Activated B cell treated with CpG ODN at 0.5 μM for 24 hours (primary cell): ENCODE measurements at regions of chr5 and their contacts with region 1.

Region 1: DNA sequence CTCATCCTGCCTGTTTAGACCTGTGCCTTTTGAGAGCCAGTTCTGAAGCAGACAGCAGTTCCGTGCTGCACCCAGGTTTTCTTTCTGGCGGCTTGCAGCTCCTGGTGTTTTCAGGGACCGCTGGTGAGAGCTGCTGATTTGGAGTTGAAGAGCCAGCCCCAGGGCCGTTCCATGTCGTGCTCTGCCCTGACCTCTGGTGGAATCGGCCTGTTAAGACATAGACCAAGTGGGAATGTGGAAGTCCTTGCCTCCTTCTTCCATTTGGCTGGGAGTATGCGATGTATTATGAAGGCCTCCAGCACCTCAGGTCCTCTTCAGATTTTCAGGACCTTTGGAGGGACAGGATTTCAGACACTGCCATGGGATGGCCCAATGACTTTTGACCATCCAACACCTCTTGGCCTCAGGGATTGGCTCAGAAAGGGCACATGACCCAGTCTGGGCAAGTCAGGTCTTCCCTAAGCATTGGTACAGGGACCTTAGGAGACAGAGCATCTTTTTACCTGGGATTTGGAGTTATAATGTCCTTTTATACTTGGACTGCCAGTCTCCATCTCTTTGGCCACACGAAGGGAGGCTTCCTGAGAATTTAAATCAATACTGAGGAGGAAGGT is 136.1 kb upstream of the CLINT1 start:
- DNase-seq: peak; percentile 21
- ATAC-seq: peak; percentile 84
- H3K4me3 Mint-ChIP-seq: no peak overlapping the region
- H3K27ac Mint-ChIP-seq: no peak overlapping the region
- H3K4me1 Mint-ChIP-seq: no peaks in the 10 kb centered on the region
- H3K27me3 Mint-ChIP-seq: peaks cover 2% of the 10 kb centered on the region
- CTCF ChIP-seq: no peak

Region 2: GRCh38 chr5:157761690-157762621 is 233.1 kb before region 1 on chr5:
- CTCF ChIA-PET with region 1: interaction called, 4 read pairs
- POLR2A ChIA-PET with region 1: no interaction called
- intact Hi-C with region 1: loop called (anchors 1 kb)
- DNase-seq: no peak
- ATAC-seq: peak; percentile 87
- H3K4me3 Mint-ChIP-seq: no peak overlapping the region
- H3K27ac Mint-ChIP-seq: no peak overlapping the region
- H3K4me1 Mint-ChIP-seq: no peaks in the 10 kb centered on the region
- H3K27me3 Mint-ChIP-seq: no peaks in the 10 kb centered on the region
- CTCF ChIP-seq: peak; percentile 17

Region 3: GRCh38 chr5:157812086-157812485 is 182.9 kb before region 1 on chr5:
- CTCF ChIA-PET with region 1: interaction called, 63 read pairs
- POLR2A ChIA-PET with region 1: interaction called, 3 read pairs
- intact Hi-C with region 1: loop called (anchors 1 kb)
- DNase-seq: no peak
- ATAC-seq: no peak
- H3K4me3 Mint-ChIP-seq: no peak overlapping the region
- H3K27ac Mint-ChIP-seq: no peak overlapping the region
- H3K4me1 Mint-ChIP-seq: no peaks in the 10 kb centered on the region
- H3K27me3 Mint-ChIP-seq: no peaks in the 10 kb centered on the region
- CTCF ChIP-seq: no peak

Region 4: DNA sequence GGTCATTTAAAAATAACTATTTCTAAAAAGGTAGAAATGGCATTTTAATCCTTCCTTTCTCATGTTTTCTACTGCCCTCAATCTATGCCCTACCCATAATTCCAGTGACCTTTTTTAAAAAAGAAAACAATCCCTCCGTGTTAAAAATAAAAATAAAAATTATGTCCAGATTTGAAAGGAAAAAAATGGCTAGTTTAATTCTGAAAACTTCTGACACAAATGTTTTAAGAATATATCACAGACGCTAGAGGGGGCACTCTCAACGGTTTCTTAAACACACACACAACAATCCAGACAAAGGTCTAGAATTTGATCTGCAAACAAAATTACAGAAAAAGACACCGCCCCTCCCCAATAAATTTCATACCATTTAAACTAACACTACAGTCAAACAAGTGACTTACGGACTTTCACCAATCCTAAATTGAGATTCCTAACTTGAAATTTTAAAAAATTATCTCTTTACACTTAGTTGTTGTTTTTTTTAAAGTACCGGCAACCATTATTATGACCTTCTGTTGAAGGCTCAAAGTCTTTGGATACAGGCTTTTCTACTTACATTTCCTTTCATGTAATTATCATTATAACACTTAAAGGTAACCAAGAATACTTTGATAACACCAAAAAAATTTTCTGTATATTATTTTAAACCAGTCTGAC is 174.3 kb before region 1 on chr5:
- CTCF ChIA-PET with region 1: interaction called, 63 read pairs
- POLR2A ChIA-PET with region 1: interaction called, 3 read pairs
- intact Hi-C with region 1: loop called (anchors 1 kb)
- DNase-seq: no peak
- ATAC-seq: no peak
- H3K4me3 Mint-ChIP-seq: no peak overlapping the region
- H3K27ac Mint-ChIP-seq: peak overlapping the region; percentile 12
- H3K4me1 Mint-ChIP-seq: peaks cover 25% of the 10 kb centered on the region
- H3K27me3 Mint-ChIP-seq: no peaks in the 10 kb centered on the region
- CTCF ChIP-seq: no peak